Mammary epithelial cell (primary cell): ENCODE measurements at regions of chr1 and their contacts with region 1.

Region 1: GRCh38 chr1:21852282-21853128 is 40.4 kb downstream of the LDLRAD2 start:
- DNase-seq: no peak
- H3K4me3 ChIP-seq: no peak overlapping the region
- H3K27ac ChIP-seq: no peak overlapping the region
- H3K4me1 ChIP-seq: peaks cover 23% of the 10 kb centered on the region
- H3K27me3 ChIP-seq: no peaks in the 10 kb centered on the region
- CTCF ChIP-seq: no peak

Region 2: GRCh38 chr1:21764615-21765423 is 87.7 kb before region 1 on chr1:
- CTCF ChIA-PET with region 1: no interaction called
- dilution Hi-C with region 1: loop called (anchors 5 kb)
- in situ Hi-C with region 1: no loop called
- intact Hi-C with region 1: no loop called
- DNase-seq: peak; percentile 90
- H3K4me3 ChIP-seq: no peak overlapping the region
- H3K27ac ChIP-seq: no peak overlapping the region
- H3K4me1 ChIP-seq: peaks cover 19% of the 10 kb centered on the region
- H3K27me3 ChIP-seq: no peaks in the 10 kb centered on the region
- CTCF ChIP-seq: no peak

Region 3: DNA sequence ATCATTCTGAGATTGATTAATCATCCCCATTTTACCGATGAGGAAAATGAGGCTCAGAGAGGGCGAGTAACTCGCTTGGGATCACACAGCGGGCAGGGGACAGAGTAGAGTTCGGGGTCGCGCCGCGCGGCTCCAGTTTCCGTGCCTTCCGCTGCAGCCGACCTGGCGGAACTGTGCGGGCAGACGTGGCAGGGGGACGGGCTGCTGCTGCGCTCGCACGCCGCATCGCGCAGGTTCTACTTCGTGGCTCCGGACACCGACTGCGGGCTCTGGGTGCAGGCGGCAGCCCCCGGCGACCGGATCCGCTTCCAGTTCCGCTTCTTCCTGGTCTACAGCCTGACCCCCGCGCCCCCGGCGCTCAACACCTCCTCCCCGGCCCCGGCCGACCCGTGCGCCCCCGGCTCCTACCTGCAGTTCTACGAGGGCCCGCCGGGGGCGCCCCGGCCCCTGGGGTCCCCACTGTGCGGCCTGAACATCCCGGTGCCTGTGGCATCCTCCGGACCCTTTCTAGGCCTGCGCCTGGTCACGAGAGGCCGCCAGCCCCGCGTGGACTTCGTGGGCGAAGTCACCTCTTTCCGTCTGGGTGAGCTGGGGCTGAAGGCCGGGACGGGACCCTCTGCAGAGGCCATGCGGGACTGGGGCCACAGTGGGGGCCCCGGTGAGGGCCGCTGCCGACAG is 38.1 kb before region 1 on chr1:
- CTCF ChIA-PET with region 1: no interaction called
- dilution Hi-C with region 1: loop called (anchors 5 kb)
- in situ Hi-C with region 1: no loop called
- intact Hi-C with region 1: no loop called
- DNase-seq: no peak
- H3K4me3 ChIP-seq: peak overlapping the region in 2 of 3 experiments; percentile 21 to 23
- H3K27ac ChIP-seq: no peak overlapping the region
- H3K4me1 ChIP-seq: peaks cover 2% of the 10 kb centered on the region
- H3K27me3 ChIP-seq: no peaks in the 10 kb centered on the region
- CTCF ChIP-seq: peak in 1 of 2 donors; percentile 47

Region 4: GRCh38 chr1:22077728-22078127 is 225.2 kb after region 1 on chr1:
- CTCF ChIA-PET with region 1: no interaction called
- dilution Hi-C with region 1: no loop called
- in situ Hi-C with region 1: no loop called
- intact Hi-C with region 1: no loop called
- DNase-seq: peak; percentile 17
- H3K4me3 ChIP-seq: no peak overlapping the region
- H3K27ac ChIP-seq: no peak overlapping the region
- H3K4me1 ChIP-seq: no peaks in the 10 kb centered on the region
- H3K27me3 ChIP-seq: no peaks in the 10 kb centered on the region
- CTCF ChIP-seq: no peak